Activated CD4-positive, alpha-beta memory T cell treated with anti-CD3 and anti-CD28 coated beads for 36 hours (primary cell): ENCODE measurements at regions of chr1 and their contacts with region 1.

Region 1: GRCh38 chr1:117367047-117368018 is at the start of gene MAN1A2:
- DNase-seq: peak; percentile 79
- H3K4me3 Mint-ChIP-seq: peak within 1 kb of the TSS; percentile 94
- H3K27ac Mint-ChIP-seq: peak within 1 kb of the TSS; percentile 96
- H3K4me1 Mint-ChIP-seq: peaks cover 50% of the 10 kb centered on the region
- H3K27me3 Mint-ChIP-seq: no peaks in the 10 kb centered on the region
- total RNA-seq, gene MAN1A2: 18.3 to 22.5 TPM

Region 2: GRCh38 chr1:116372587-116373444 is 994.5 kb before region 1 on chr1 and contains the start of gene ATP1A1:
- CTCF ChIA-PET with region 1: no interaction called
- POLR2A ChIA-PET with region 1: no interaction called
- intact Hi-C with region 1: loop called (anchors 10 kb)
- DNase-seq: peak; percentile 98
- H3K4me3 Mint-ChIP-seq: peak within 1 kb of the TSS; percentile 88
- H3K27ac Mint-ChIP-seq: peak within 1 kb of the TSS; percentile 97
- H3K4me1 Mint-ChIP-seq: peaks cover 38% of the 10 kb centered on the region
- H3K27me3 Mint-ChIP-seq: peaks cover 3% of the 10 kb centered on the region
- total RNA-seq, gene ATP1A1: 253 to 258 TPM

Region 3: GRCh38 chr1:116763787-116764465 is 603.4 kb before region 1 on chr1:
- CTCF ChIA-PET with region 1: no interaction called
- POLR2A ChIA-PET with region 1: no interaction called
- intact Hi-C with region 1: loop called (anchors 10 kb)
- DNase-seq: peak; percentile 79
- H3K4me3 Mint-ChIP-seq: peak overlapping the region; percentile 99
- H3K27ac Mint-ChIP-seq: peak overlapping the region; percentile 99
- H3K4me1 Mint-ChIP-seq: peaks cover 88% of the 10 kb centered on the region
- H3K27me3 Mint-ChIP-seq: peaks cover 3% of the 10 kb centered on the region

Region 4: GRCh38 chr1:117121776-117122697 is 245.3 kb before region 1 on chr1:
- CTCF ChIA-PET with region 1: no interaction called
- POLR2A ChIA-PET with region 1: no interaction called
- intact Hi-C with region 1: loop called (anchors 10 kb)
- DNase-seq: peak; percentile 91
- H3K4me3 Mint-ChIP-seq: peak overlapping the region; percentile 72
- H3K27ac Mint-ChIP-seq: no peak overlapping the region
- H3K4me1 Mint-ChIP-seq: peaks cover 8% of the 10 kb centered on the region
- H3K27me3 Mint-ChIP-seq: peaks cover 8% of the 10 kb centered on the region

Region 5: DNA sequence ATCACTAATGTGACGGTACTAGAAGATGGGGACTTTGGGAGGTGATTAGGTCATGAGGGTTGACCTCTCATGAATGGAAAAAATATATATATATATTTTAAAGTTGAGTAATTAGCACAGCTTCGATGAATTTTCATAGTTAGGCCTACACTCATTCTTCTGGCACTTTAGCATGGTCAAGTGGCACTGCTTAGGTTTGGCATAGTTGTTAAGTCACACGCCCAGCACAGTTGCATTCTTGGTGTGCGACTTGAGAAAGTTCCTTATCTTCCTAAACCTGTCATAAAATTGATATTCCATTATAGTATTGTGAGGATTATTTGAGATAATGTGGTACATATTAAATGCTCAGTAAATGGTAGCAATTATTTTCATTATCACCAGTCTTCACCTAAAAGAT is 47.6 kb after region 1 on chr1:
- CTCF ChIA-PET with region 1: no interaction called
- POLR2A ChIA-PET with region 1: no interaction called
- intact Hi-C with region 1: loop called (anchors 5 kb)
- DNase-seq: no peak
- H3K4me3 Mint-ChIP-seq: no peak overlapping the region
- H3K27ac Mint-ChIP-seq: no peak overlapping the region
- H3K4me1 Mint-ChIP-seq: peaks cover 11% of the 10 kb centered on the region
- H3K27me3 Mint-ChIP-seq: no peaks in the 10 kb centered on the region

Region 6: DNA sequence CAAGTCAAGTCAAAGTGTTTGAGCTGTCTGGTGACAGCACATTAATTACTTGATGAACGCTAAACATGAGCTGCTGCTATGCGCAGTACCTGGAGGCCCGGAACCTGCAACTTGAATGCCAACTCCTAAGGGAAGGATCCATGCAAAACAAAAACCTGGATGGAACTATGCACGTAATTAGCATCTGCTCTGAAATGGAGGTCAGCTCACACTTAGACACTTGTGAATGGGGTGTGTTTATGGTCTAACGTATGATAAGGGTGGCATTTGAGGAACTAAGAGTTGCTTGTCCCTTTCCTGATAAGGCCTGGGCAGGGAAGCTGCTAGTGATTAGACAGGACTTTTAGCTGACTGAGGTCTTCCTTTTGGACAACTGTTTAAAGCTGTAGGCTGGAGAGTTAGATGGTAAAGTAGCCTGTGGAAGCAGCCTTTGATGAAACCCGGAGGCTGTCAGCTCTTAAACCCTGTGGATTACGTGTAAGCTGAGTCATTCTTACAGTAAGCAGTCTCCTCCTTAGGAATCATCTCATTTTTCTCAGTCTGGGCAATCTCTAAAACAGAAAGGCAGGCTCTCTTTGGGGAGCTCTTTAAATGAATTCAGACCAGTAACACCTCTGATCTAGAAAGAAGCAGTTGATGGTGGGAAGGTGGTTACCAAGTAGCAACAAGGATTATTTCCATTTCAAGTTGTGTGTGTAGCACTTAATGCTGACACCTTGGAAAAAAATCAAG is 245.3 kb after region 1 on chr1:
- CTCF ChIA-PET with region 1: no interaction called
- POLR2A ChIA-PET with region 1: no interaction called
- intact Hi-C with region 1: loop called (anchors 2 kb)
- DNase-seq: peak; percentile 23
- H3K4me3 Mint-ChIP-seq: no peak overlapping the region
- H3K27ac Mint-ChIP-seq: peak overlapping the region; percentile 64
- H3K4me1 Mint-ChIP-seq: peaks cover 86% of the 10 kb centered on the region
- H3K27me3 Mint-ChIP-seq: no peaks in the 10 kb centered on the region

Region 7: GRCh38 chr1:117929173-117929989 is 562.0 kb after region 1 on chr1 and contains the starts of genes GDAP2 and WDR3:
- CTCF ChIA-PET with region 1: no interaction called
- POLR2A ChIA-PET with region 1: no interaction called
- intact Hi-C with region 1: loop called (anchors 10 kb)
- DNase-seq: peak; percentile 98
- H3K4me3 Mint-ChIP-seq: peak within 1 kb of the TSS; percentile 96
- H3K27ac Mint-ChIP-seq: peak within 1 kb of the TSS; percentile 86
- H3K4me1 Mint-ChIP-seq: peaks cover 48% of the 10 kb centered on the region
- H3K27me3 Mint-ChIP-seq: no peaks in the 10 kb centered on the region
- total RNA-seq, gene GDAP2: 19.1 to 20.8 TPM
- total RNA-seq, gene WDR3: 48.3 to 51.8 TPM